ENCODE measurements at regions of chr14 and their contacts with region 1.

Region 1: GRCh38 chr14:64026600-64026999 is 173.8 kb downstream of the SYNE2 start:
- DNase-seq: no peak
- ATAC-seq: no peak
- H3K4me3 ChIP-seq: no peak overlapping the region
- H3K27ac ChIP-seq: no peak overlapping the region
- H3K4me1 ChIP-seq: no peaks in the 10 kb centered on the region
- CTCF ChIP-seq: no peak
- EP300 ChIP-seq: no peak
- POLR2A ChIP-seq: no peak
- RAD21 ChIP-seq: no peak

Region 2: GRCh38 chr14:64012720-64013119 is 13.9 kb before region 1 on chr14:
- CTCF ChIA-PET with region 1: interaction called, 16 read pairs
- POLR2A ChIA-PET with region 1: no interaction called
- DNase-seq: no peak
- ATAC-seq: no peak
- H3K4me3 ChIP-seq: no peak overlapping the region
- H3K27ac ChIP-seq: no peak overlapping the region
- H3K4me1 ChIP-seq: no peaks in the 10 kb centered on the region
- CTCF ChIP-seq: no peak
- EP300 ChIP-seq: no peak
- POLR2A ChIP-seq: no peak
- RAD21 ChIP-seq: no peak

Measured in A549 (cell line).